Pancreas (tissue), 10 donors: ENCODE measurements at regions of chr9 and their contacts with region 1.

Region 1: DNA sequence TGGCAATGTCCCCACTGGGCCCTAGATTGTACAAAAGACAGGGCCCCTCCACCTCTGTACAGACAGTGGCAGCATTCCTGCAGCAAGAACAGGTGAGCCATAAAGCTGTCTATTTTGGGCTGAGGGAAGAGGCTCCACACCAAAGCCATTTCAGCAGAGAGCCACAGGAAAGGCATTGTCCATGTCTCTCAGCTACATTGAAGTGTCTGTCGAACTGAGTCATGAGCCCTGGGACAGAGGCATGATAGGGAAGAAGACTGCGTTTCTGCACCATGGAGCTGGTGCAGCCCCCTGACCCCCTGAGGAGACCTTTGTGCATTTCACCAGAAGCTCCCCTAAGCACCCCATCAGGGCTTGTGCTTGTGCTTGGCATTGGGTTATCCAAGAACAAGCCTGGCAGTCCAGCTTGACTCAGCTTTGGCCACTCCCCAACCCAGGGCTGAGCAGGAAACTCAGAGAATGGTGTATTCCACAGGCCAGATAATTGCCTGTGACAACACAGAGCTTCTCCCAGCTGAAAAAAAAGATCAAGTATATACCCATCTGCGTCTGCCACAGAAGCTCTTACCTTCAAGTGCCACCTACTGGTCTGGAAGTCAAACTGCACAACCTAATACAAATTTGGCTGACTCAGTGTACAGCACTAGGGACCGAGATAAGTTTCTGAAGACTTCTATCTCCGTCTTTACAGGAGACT is 5.9 kb upstream of the FRMD3 start:
- DNase-seq: peak in 1 of 6 donors; percentile 18
- ATAC-seq: peak; percentile 86 to 98 (median 94)
- H3K4me3 ChIP-seq: no peak overlapping the region
- H3K27ac ChIP-seq: no peak overlapping the region
- H3K4me1 ChIP-seq: no peaks in the 10 kb centered on the region
- H3K27me3 ChIP-seq: no peaks in the 10 kb centered on the region
- CTCF ChIP-seq: peak; percentile 35 to 64 (median 56)

Region 2: GRCh38 chr9:83219152-83219923 is 324.8 kb before region 1 on chr9:
- intact Hi-C with region 1: loop called in 1 of 3 experiments (anchors 5 kb)
- DNase-seq: peak; percentile 86 to 92 (median 88)
- ATAC-seq: peak; percentile 87 to 93 (median 92)
- H3K4me3 ChIP-seq: peak overlapping the region; percentile 30 to 59 (median 44)
- H3K27ac ChIP-seq: peak overlapping the region; percentile 63 to 86 (median 79)
- H3K4me1 ChIP-seq: peaks cover 0 to 25% (median 17%) of the 10 kb centered on the region in 3 donors
- H3K27me3 ChIP-seq: no peaks in the 10 kb centered on the region
- CTCF ChIP-seq: peak in 2 of 4 donors; percentile 26 to 56

Region 3: GRCh38 chr9:83334320-83334719 is 209.8 kb before region 1 on chr9:
- intact Hi-C with region 1: loop called in 2 of 3 experiments (anchors 5 to 10 kb)
- DNase-seq: peak; percentile 66 to 96 (median 86)
- ATAC-seq: peak; percentile 95 to 99 (median 98)
- H3K4me3 ChIP-seq: no peak overlapping the region
- H3K27ac ChIP-seq: no peak overlapping the region
- H3K4me1 ChIP-seq: no peaks in the 10 kb centered on the region
- H3K27me3 ChIP-seq: no peaks in the 10 kb centered on the region
- CTCF ChIP-seq: peak; percentile 86 to 93 (median 91)

Region 4: GRCh38 chr9:83346655-83347420 is 197.3 kb before region 1 on chr9:
- intact Hi-C with region 1: no loop called
- DNase-seq: no peak
- ATAC-seq: no peak
- H3K4me3 ChIP-seq: no peak overlapping the region
- H3K27ac ChIP-seq: no peak overlapping the region
- H3K4me1 ChIP-seq: no peaks in the 10 kb centered on the region
- H3K27me3 ChIP-seq: no peaks in the 10 kb centered on the region
- CTCF ChIP-seq: no peak